Esophagus muscularis mucosa (tissue), 4 donors: ENCODE measurements at regions of chr2 and their contacts with region 1.

Region 1: DNA sequence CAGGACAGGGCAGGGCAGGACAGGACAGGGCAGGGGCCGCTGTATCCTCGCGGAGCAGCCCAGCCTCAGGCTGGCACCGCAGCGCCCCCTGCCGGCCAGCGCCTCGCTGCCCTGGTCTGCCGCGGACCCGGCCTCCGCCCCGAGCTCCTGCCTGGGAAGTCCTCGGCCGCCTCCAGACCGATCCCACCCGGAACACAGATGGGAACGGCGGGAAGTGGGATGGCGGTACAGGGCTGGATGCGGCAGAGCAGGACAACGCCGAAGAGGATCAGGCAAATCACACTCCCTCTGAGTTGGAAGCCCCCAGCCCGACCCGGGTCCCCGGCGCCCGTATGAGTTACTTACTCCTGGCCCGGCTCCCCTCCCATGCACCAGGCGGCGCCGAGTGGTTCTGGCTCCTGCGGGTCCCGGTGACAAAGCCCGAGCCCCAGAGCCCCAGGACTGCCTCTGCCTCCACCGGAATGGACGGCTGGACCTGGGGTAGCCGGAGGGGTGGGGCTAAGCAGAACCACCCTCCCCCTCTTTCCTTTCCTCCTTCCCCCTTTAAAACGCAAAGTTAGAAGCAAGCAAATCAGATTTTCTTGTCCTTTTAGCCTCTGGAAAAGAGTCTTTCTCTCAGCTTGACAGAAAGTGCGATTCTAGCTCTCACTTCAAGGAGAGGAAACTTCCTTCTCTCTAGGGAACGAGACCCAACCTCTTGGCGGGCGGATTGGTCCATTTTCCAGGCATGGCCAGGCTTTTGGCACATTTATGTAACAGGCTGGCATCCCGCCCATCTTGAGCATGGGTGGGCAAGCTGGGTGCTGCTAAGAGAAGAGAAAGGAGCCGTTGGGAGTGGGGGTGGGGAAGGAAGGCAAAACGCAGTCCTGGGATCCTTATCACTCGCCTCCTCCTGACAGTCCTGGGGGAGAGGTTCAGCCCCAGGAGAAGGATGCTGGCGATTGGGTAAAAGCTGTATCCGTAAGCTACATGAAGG is at the start of gene TP53I3:
- DNase-seq: peak; percentile 96
- H3K4me3 ChIP-seq: peak within 1 kb of the TSS; percentile 61 to 72 (median 70)
- H3K27ac ChIP-seq: peak within 1 kb of the TSS; percentile 85 to 93 (median 92)
- H3K4me1 ChIP-seq: peaks cover 7 to 22% (median 21%) of the 10 kb centered on the region in 4 donors
- H3K27me3 ChIP-seq: no peaks in the 10 kb centered on the region
- CTCF ChIP-seq: peak; percentile 89 to 96 (median 95)
- EP300 ChIP-seq: no peak
- POLR2A ChIP-seq: peak; percentile 24
- total RNA-seq, gene TP53I3: 5.3 to 11.3 (median 9.6) TPM

Region 2: GRCh38 chr2:23824777-23825212 is 259.9 kb before region 1 on chr2:
- intact Hi-C with region 1: loop called (anchors 5 kb)
- DNase-seq: no peak
- H3K4me3 ChIP-seq: no peak overlapping the region
- H3K27ac ChIP-seq: no peak overlapping the region
- H3K4me1 ChIP-seq: peaks cover 0 to 8% (median 3%) of the 10 kb centered on the region in 4 donors
- H3K27me3 ChIP-seq: no peaks in the 10 kb centered on the region
- CTCF ChIP-seq: peak; percentile 65 to 72 (median 68)
- EP300 ChIP-seq: no peak
- POLR2A ChIP-seq: no peak

Region 3: DNA sequence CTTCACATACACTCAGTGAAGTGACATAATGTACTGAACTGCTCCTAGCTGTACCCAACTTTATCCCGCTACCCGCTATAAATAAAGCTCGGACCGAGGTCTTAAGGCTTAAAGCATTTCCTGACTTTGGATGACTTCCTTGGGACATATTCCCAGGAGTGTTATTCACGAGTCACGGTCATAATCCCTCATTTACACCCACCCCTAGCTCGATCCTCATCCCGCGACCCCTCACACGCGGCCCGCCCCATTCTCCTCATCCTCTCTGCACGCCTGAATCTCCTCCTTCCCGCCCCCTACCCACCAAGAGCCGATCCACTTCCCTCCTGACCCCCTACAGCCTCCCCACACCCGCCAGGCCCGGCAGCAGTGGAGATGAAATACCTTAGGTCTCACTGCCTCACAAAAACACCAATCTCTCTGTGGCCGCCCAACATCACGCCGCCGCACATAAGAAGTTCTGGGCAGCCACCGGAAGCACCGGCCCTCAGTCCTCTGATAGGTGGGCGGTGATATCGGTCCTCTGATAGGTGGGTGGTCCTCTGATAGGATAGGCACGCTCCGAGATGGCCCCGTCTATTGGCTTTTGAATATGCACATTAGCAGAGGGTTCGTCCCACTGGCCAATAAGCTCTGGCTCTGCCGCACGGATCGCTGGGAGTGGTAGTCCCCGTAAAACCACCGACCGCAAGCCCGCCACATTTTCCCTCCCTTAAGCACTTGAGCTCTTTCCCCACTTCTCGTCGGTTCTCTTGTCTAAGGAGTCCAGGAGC is 37.6 kb before region 1 on chr2 and contains the start of gene WDCP:
- intact Hi-C with region 1: loop called (anchors 5 kb)
- DNase-seq: peak; percentile 98
- H3K4me3 ChIP-seq: peak within 1 kb of the TSS; percentile 74 to 88 (median 82)
- H3K27ac ChIP-seq: peak within 1 kb of the TSS; percentile 76 to 85 (median 79)
- H3K4me1 ChIP-seq: peaks cover 13 to 48% (median 38%) of the 10 kb centered on the region in 4 donors
- H3K27me3 ChIP-seq: no peaks in the 10 kb centered on the region
- CTCF ChIP-seq: no peak
- EP300 ChIP-seq: no peak
- POLR2A ChIP-seq: no peak
- total RNA-seq, gene WDCP: 4.5 to 9.1 (median 6.2) TPM

Region 4: GRCh38 chr2:24477229-24477628 is 392.6 kb after region 1 on chr2:
- intact Hi-C with region 1: no loop called
- DNase-seq: no peak
- H3K4me3 ChIP-seq: no peak overlapping the region
- H3K27ac ChIP-seq: no peak overlapping the region
- H3K4me1 ChIP-seq: no peaks in the 10 kb centered on the region
- H3K27me3 ChIP-seq: no peaks in the 10 kb centered on the region
- CTCF ChIP-seq: no peak
- EP300 ChIP-seq: no peak
- POLR2A ChIP-seq: no peak